GM10248 (cell line): ENCODE measurements at regions of chrX and their contacts with region 1.

Region 1: GRCh38 chrX:54891573-54891972 is 29.1 kb upstream of the TRO start:
- DNase-seq: peak; percentile 20
- CTCF ChIP-seq: peak; percentile 40

Region 2: GRCh38 chrX:55057675-55058249 is 166.2 kb after region 1 on chrX:
- CTCF ChIA-PET with region 1: interaction called, 16 read pairs
- POLR2A ChIA-PET with region 1: no interaction called
- DNase-seq: peak; percentile 27
- CTCF ChIP-seq: peak; percentile 63